MCF 10A (cell line): ENCODE measurements at regions of chr1 and their contacts with region 1.

Region 1: GRCh38 chr1:86419277-86419903 is 4.6 kb upstream of the CLCA2 start:
- DNase-seq: peak; percentile 73
- H3K4me3 Mint-ChIP-seq: no peak overlapping the region
- H3K27ac Mint-ChIP-seq: peak overlapping the region; percentile 52
- H3K4me1 Mint-ChIP-seq: peaks cover 30% of the 10 kb centered on the region
- H3K27me3 Mint-ChIP-seq: no peaks in the 10 kb centered on the region
- CTCF ChIP-seq: peak; percentile 58

Region 2: DNA sequence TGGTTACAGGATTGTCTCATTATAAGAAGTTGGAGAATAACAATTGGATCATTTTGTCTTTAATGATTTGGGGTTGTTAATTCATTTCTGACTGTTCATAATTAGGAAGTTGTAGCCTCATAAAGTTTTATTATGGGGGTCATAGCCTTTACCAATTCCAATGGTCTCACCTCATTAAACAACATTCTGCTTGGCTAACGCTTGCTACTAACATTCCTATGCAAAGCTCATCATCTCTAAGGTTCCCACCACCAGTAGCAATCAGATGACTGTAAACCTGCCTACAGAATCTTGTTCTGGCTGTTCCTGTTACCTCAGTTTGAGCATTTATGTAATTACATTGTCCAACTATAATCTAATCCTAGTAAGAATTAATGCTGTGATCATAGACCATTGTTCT is 83.5 kb before region 1 on chr1:
- CTCF ChIA-PET with region 1: no interaction called
- POLR2A ChIA-PET with region 1: no interaction called
- intact Hi-C with region 1: no loop called
- DNase-seq: no peak
- H3K4me3 Mint-ChIP-seq: no peak overlapping the region
- H3K27ac Mint-ChIP-seq: no peak overlapping the region
- H3K4me1 Mint-ChIP-seq: no peaks in the 10 kb centered on the region
- H3K27me3 Mint-ChIP-seq: no peaks in the 10 kb centered on the region
- CTCF ChIP-seq: no peak

Region 3: DNA sequence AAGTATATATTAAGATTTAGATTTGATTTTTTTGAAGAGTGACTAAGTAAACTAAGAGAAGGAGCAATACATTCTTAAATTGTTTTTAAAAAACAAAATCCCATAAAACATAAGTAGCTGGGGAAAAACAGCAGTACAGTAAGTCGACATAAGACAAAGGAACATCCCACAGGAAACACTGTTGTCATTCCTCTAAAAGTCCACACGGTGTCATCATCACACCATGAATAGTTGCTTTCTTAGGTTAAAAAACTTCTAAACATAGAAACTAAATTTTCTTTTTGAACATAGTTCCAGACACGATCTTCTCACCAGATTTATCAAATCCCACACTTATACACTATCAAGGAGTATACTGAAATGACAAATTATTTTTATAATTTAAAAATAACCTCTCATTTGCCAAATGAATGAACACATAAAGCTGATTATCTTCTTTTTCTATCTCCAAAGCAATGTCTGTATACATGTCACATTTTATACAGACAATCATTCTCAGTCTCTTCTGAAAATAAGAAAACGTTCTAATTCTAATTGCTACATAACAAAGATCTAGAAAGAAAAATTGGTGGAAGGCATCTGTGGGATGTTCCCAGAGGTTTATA is 39.0 kb before region 1 on chr1:
- CTCF ChIA-PET with region 1: interaction called, 5 read pairs
- POLR2A ChIA-PET with region 1: interaction called, 40 read pairs
- intact Hi-C with region 1: loop called (anchors 1 kb)
- DNase-seq: peak; percentile 73
- H3K4me3 Mint-ChIP-seq: no peak overlapping the region
- H3K27ac Mint-ChIP-seq: no peak overlapping the region
- H3K4me1 Mint-ChIP-seq: no peaks in the 10 kb centered on the region
- H3K27me3 Mint-ChIP-seq: no peaks in the 10 kb centered on the region
- CTCF ChIP-seq: peak; percentile 82

Region 4: DNA sequence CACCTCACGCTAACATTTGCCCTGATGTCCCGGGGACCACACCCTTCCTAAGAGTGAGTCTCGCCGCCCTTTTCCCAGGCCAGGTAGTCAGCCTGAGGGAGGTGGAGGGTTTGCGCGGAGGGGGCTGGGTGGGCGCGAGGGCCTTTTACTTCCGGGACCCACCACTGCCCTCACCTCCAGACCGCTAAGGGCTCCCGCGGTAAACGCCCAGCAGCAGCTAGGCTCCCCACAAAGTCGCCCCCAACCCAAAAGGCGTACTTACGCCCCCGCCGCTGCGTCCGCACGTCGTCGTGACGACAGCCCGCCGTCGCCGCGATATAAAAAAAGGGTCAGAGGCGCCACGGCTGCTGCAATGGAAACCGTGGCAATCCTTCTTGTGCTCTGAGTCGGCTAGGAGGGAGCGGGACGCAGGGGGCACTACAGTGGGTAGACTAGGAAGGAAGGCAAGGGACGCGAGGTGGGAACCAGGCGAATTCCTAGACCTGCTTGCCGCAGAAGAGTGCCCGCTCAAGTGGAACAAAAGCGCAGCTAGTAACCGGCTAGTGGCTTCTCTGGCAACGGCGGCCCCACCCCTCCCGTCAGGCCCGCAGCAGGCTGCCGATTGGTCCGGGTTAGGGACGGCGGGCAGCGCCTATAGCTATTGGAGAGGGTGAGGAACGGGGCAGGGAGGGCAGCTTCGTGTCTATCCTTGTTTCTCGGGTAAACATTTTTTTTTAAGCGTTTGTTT is 23.5 kb before region 1 on chr1 and contains the start of gene ODF2L:
- CTCF ChIA-PET with region 1: interaction called, 6 read pairs
- POLR2A ChIA-PET with region 1: interaction called, 126 read pairs
- intact Hi-C with region 1: no loop called
- DNase-seq: peak; percentile 90
- H3K4me3 Mint-ChIP-seq: peak within 1 kb of the TSS; percentile 94
- H3K27ac Mint-ChIP-seq: peak within 1 kb of the TSS; percentile 98
- H3K4me1 Mint-ChIP-seq: peaks cover 13% of the 10 kb centered on the region
- H3K27me3 Mint-ChIP-seq: no peaks in the 10 kb centered on the region
- CTCF ChIP-seq: no peak
- total RNA-seq, gene ODF2L: 35.5 and 39.0 TPM in 2 replicates

Region 5: DNA sequence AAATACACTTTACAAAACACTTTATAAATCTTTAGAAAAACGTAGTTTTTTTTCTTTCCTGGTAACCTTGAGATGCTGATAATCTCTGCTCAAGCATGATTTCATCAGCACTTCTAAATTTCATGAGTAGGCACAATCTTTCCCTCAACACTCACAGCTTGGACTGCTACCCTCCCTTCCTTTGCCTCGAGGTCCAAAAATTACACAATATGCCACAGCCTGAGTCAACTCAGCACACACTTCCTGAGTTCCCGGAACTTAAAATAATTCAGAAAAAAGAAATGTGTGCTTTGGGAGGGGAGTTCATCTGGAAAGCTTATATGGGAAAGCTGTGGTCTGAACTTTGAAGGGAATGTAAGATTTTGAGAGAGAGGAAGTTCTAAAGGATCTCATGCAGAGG is 10.4 kb after region 1 on chr1:
- CTCF ChIA-PET with region 1: interaction called, 6 read pairs
- POLR2A ChIA-PET with region 1: interaction called, 24 read pairs
- intact Hi-C with region 1: no loop called
- DNase-seq: peak; percentile 96
- H3K4me3 Mint-ChIP-seq: no peak overlapping the region
- H3K27ac Mint-ChIP-seq: no peak overlapping the region
- H3K4me1 Mint-ChIP-seq: peaks cover 13% of the 10 kb centered on the region
- H3K27me3 Mint-ChIP-seq: no peaks in the 10 kb centered on the region
- CTCF ChIP-seq: no peak

Region 6: DNA sequence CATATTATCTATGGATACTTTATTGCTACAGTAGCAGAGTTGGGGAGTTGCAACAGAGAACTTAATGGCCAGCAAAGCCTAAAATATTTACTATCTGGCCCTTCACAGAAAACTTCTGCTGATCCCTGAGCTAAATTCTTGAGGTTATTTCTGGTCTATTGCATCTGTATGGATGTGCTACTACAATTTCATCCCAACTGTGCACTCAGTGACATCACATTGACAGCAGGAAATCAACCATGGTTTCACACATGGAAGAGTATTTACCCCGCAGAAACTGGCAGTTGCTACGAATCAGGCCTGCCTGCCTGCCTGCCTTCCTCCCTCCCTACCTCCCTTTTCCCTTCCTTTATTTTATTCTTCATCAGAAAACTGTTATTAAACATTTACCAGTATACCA is 16.7 kb after region 1 on chr1:
- CTCF ChIA-PET with region 1: interaction called, 5 read pairs
- POLR2A ChIA-PET with region 1: interaction called, 24 read pairs
- intact Hi-C with region 1: no loop called
- DNase-seq: no peak
- H3K4me3 Mint-ChIP-seq: no peak overlapping the region
- H3K27ac Mint-ChIP-seq: no peak overlapping the region
- H3K4me1 Mint-ChIP-seq: no peaks in the 10 kb centered on the region
- H3K27me3 Mint-ChIP-seq: no peaks in the 10 kb centered on the region
- CTCF ChIP-seq: no peak

Region 7: DNA sequence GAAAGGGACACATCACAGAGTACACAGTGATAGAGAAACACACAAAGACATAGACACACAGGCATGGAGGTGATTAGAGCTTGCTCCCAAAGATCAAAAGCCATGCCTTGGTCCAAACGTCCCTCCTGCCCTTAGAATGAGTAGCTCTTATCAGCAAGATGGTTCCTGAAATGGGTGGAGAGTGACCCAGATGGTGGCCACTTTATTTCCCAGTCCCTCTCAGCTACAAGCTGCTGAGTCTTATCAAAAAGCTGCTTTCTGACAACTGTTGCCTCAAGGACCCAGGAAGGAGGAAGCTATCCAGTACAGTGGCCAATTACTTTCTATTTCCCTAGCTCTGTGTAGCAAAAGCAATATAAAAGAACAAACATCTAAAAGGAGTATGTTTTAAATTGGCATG is 41.6 kb after region 1 on chr1:
- CTCF ChIA-PET with region 1: interaction called, 4 read pairs
- POLR2A ChIA-PET with region 1: interaction called, 10 read pairs
- intact Hi-C with region 1: no loop called
- DNase-seq: no peak
- H3K4me3 Mint-ChIP-seq: no peak overlapping the region
- H3K27ac Mint-ChIP-seq: no peak overlapping the region
- H3K4me1 Mint-ChIP-seq: no peaks in the 10 kb centered on the region
- H3K27me3 Mint-ChIP-seq: no peaks in the 10 kb centered on the region
- CTCF ChIP-seq: no peak

Region 8: GRCh38 chr1:86552366-86552765 is 133.0 kb after region 1 on chr1:
- CTCF ChIA-PET with region 1: no interaction called
- POLR2A ChIA-PET with region 1: no interaction called
- intact Hi-C with region 1: no loop called
- DNase-seq: no peak
- H3K4me3 Mint-ChIP-seq: no peak overlapping the region
- H3K27ac Mint-ChIP-seq: no peak overlapping the region
- H3K4me1 Mint-ChIP-seq: no peaks in the 10 kb centered on the region
- H3K27me3 Mint-ChIP-seq: no peaks in the 10 kb centered on the region
- CTCF ChIP-seq: no peak

Region 9: GRCh38 chr1:86687595-86687994 is 268.2 kb after region 1 on chr1:
- CTCF ChIA-PET with region 1: no interaction called
- POLR2A ChIA-PET with region 1: no interaction called
- intact Hi-C with region 1: loop called (anchors 10 kb)
- DNase-seq: peak; percentile 16
- H3K4me3 Mint-ChIP-seq: no peak overlapping the region
- H3K27ac Mint-ChIP-seq: no peak overlapping the region
- H3K4me1 Mint-ChIP-seq: no peaks in the 10 kb centered on the region
- H3K27me3 Mint-ChIP-seq: no peaks in the 10 kb centered on the region
- CTCF ChIP-seq: peak; percentile 39